Left ventricle myocardium superior (tissue), 1 donor: ENCODE measurements at regions of chr10 and their contacts with region 1.

Region 1: DNA sequence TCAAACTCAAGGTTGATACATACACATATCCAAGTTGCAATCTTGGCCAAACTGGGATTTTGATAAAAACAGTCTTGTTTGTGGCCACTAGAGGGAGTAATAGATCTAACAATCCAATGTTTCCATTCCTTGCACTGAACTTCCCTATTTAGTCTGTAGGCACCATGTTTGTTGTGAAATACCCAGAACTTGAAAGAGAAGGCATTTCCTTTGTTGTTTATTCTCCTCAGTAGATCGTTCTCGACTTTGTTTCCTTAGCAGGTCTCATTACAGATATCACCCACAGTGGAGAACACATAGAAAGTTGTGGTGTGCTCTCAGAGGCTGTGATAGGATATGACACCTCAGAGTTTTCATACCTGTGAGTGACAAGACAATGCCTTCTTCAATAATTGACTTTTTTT is 70.3 kb upstream of the MXI1 start:
- DNase-seq: no peak
- ATAC-seq: peak; percentile 78

Region 2: GRCh38 chr10:110206995-110207804 is 70.1 kb after region 1 on chr10 and contains the start of gene MXI1:
- intact Hi-C with region 1: loop called (anchors 5 kb)
- DNase-seq: peak; percentile 83
- ATAC-seq: peak; percentile 28
- total RNA-seq, gene MXI1: 79.8 TPM

Region 3: DNA sequence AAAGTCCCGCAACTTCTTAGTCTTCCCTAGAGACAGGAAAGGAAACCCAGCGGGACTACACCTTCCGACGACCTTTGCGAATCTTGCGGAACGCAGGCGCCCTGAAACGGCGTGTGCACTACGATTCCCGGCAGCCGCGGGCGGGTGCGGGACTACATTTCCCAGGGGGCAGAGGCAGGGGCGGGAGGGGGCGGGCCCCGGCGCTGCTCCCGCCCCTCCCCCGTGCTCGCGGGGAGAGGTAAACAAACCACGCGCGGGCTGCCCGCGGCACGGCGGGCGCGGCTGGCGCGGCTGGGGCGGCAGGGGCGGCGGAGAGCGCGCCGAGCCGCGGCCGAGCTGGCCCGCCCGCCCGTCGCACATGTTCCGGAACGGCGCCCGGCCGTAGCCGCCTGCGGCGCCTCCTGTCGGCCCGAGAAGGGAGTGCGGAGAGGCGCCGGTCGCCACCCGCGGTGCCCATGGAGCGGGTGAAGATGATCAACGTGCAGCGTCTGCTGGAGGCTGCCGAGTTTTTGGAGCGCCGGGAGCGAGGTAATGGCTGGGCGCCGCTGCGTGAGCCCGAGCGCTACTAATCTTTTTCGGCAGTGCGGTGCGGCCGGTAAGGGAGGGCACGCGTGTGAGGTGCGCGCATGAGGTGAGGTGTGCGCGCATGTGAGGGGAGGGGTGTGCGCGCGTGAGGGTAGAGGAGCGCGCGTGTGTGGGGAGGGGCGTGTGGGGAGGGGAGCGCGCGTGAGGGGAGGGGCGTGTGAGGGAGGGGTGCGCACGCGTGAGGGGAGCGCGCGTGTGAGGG is 88.8 kb after region 1 on chr10:
- intact Hi-C with region 1: loop called (anchors 5 kb)
- DNase-seq: peak; percentile 95
- ATAC-seq: peak; percentile 71

Region 4: GRCh38 chr10:110279407-110279986 is 142.4 kb after region 1 on chr10:
- intact Hi-C with region 1: loop called (anchors 2 kb)
- DNase-seq: no peak
- ATAC-seq: peak; percentile 78